ENCODE measurements at regions of chr2 and their contacts with region 1.

Region 1: GRCh38 chr2:46632349-46632748 is 153.0 kb downstream of the TMEM247 start:
- DNase-seq: peak in 1 of 2 donors; percentile 54
- ATAC-seq: no peak
- H3K4me3 ChIP-seq: no peak overlapping the region
- H3K4me3 Mint-ChIP-seq: no peak overlapping the region
- H3K27ac ChIP-seq: no peak overlapping the region
- H3K27ac Mint-ChIP-seq: peak overlapping the region in 1 of 2 donors; percentile 58
- H3K4me1 ChIP-seq: no peaks in the 10 kb centered on the region
- H3K4me1 Mint-ChIP-seq: peaks cover 7 to 19% of the 10 kb centered on the region in 2 donors
- H3K27me3 ChIP-seq: no peaks in the 10 kb centered on the region
- H3K27me3 Mint-ChIP-seq: no peaks in the 10 kb centered on the region
- CTCF ChIP-seq: peak; percentile 42

Region 2: GRCh38 chr2:46650556-46651001 is 18.2 kb after region 1 on chr2:
- intact Hi-C with region 1: loop called (anchors 2 kb)
- DNase-seq: peak; percentile 44 to 90
- ATAC-seq: peak; percentile 84 to 93 (median 85)
- H3K4me3 ChIP-seq: no peak overlapping the region
- H3K4me3 Mint-ChIP-seq: no peak overlapping the region
- H3K27ac ChIP-seq: no peak overlapping the region
- H3K27ac Mint-ChIP-seq: no peak overlapping the region
- H3K4me1 ChIP-seq: no peaks in the 10 kb centered on the region
- H3K4me1 Mint-ChIP-seq: no peaks in the 10 kb centered on the region
- H3K27me3 ChIP-seq: no peaks in the 10 kb centered on the region
- H3K27me3 Mint-ChIP-seq: no peaks in the 10 kb centered on the region
- CTCF ChIP-seq: peak; percentile 98

Region 3: DNA sequence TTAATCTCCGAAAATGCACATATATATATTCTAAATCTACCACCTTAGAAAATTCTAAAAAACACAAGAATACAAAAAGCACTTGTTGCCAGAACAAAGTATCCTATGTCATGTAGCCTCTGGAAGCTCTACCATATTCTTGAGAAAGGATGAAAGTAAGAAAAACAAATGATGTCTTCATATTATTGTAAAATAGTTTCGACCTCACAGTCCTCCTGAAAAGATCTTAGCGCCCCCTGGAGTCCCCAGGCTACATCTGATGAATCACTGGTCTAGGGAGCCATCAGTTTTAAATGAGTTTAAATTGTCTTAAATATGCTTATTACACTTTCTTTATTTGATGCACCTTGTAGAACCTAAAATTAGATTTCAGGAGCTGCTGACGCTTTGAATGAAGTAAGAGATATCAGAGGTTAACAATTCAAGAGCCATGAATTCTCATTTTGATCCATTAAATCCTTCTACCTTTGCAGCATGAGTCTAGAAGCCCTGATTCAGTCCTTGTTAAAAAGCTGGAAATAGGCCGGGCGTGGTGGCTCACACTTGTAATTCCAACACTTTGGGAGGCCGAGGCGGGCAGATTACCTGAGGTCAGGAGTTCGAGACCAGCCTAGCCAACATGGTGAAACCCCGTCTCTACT is 144.5 kb after region 1 on chr2:
- intact Hi-C with region 1: loop called (anchors 1 kb)
- DNase-seq: peak in 1 of 2 donors; percentile 62
- ATAC-seq: peak in 1 of 3 donors; percentile 57
- H3K4me3 ChIP-seq: no peak overlapping the region
- H3K4me3 Mint-ChIP-seq: no peak overlapping the region
- H3K27ac ChIP-seq: no peak overlapping the region
- H3K27ac Mint-ChIP-seq: no peak overlapping the region
- H3K4me1 ChIP-seq: no peaks in the 10 kb centered on the region
- H3K4me1 Mint-ChIP-seq: no peaks in the 10 kb centered on the region
- H3K27me3 ChIP-seq: no peaks in the 10 kb centered on the region
- H3K27me3 Mint-ChIP-seq: no peaks in the 10 kb centered on the region
- CTCF ChIP-seq: peak; percentile 64